Right cardiac atrium (tissue), 5 donors: ENCODE measurements at regions of chr19 and their contacts with region 1.

Region 1: GRCh38 chr19:29263305-29264135 is 50.6 kb upstream of the UQCRFS1 start:
- DNase-seq: peak in 2 of 3 donors; percentile 68 to 73
- ATAC-seq: peak; percentile 17 to 50
- H3K4me3 ChIP-seq: no peak overlapping the region
- H3K27ac ChIP-seq: no peak overlapping the region
- H3K4me1 ChIP-seq: no peaks in the 10 kb centered on the region
- H3K27me3 ChIP-seq: no peaks in the 10 kb centered on the region

Region 2: DNA sequence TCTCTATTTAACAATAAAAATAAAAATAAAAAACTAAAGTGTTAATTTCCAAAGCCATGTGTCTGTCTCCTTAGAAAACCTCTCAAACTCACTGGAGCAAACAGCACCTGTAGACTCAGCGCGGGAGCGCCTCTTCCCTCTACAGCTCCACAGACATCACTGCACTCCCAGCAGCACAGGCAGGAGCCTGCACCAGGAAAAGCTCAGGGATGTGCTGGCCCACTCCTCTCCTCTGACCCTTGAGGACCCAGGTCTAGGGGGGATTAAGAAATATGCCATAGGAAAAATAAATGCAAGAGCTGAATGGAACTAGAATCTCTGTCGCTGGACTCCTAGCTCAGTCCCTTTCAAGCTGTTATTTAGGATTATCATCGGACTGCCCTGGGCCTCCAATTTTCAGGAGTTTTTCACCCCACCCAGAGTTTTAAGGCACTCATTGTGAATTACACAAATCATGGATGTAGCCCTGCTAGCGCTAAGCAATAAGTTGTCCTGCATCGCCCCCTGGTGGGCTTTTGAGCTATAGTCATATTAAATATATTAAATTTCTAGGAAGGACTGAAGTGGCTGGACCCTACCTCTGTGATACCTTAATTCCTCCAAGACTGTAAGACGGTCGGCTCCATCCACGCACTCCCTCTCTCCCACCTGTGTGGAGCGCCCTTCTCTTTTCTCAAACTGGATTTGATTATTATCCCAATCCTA is 384.5 kb before region 1 on chr19:
- intact Hi-C with region 1: loop called in 1 of 4 experiments (anchors 10 kb)
- DNase-seq: peak; percentile 66 to 84 (median 79)
- ATAC-seq: peak in 1 of 2 donors; percentile 58
- H3K4me3 ChIP-seq: no peak overlapping the region
- H3K27ac ChIP-seq: no peak overlapping the region
- H3K4me1 ChIP-seq: no peaks in the 10 kb centered on the region
- H3K27me3 ChIP-seq: no peaks in the 10 kb centered on the region

Region 3: GRCh38 chr19:29176981-29177754 is 86.4 kb before region 1 on chr19:
- intact Hi-C with region 1: no loop called
- DNase-seq: no peak
- ATAC-seq: no peak
- H3K4me3 ChIP-seq: no peak overlapping the region
- H3K27ac ChIP-seq: no peak overlapping the region
- H3K4me1 ChIP-seq: no peaks in the 10 kb centered on the region
- H3K27me3 ChIP-seq: no peaks in the 10 kb centered on the region

Region 4: GRCh38 chr19:29505097-29505824 is 241.7 kb after region 1 on chr19:
- intact Hi-C with region 1: no loop called
- DNase-seq: no peak
- ATAC-seq: peak in 1 of 2 donors; percentile 11
- H3K4me3 ChIP-seq: no peak overlapping the region
- H3K27ac ChIP-seq: no peak overlapping the region
- H3K4me1 ChIP-seq: no peaks in the 10 kb centered on the region
- H3K27me3 ChIP-seq: no peaks in the 10 kb centered on the region